ENCODE measurements at regions of chr17 and their contacts with region 1.

Region 1: DNA sequence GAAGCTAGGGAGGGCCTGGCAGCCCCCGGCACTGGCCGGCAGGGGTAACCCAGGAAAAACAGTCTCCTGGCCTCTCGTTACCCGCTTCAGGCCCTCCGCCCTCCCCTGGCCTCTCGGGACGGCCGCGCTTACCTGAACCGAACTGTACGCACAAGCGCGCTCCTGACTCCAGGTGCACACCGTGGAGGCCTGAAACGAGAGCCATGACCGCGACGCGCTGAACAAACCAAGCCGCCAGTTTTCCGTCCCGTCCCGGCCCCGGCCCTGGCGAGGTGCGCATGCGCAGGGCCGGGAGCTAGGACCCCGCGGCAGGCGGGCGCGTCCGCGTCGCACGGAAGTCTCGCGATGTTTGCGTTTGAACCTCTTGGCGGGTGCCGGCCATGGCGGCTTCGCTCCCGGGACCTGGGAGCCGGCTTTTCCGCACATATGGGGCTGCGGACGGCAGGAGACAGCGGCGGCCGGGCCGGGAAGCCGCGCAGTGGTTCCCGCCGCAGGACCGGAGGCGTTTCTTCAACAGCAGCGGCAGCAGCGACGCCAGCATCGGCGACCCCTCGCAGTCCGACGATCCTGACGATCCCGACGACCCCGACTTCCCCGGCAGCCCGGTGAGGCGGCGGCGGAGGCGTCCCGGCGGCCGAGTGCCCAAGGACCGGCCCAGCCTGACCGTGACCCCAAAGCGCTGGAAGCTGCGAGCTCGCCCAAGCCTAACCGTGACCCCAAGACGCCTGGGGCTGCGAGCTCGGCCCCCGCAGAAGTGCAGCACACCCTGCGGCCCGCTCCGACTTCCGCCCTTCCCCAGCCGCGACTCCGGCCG is at the start of gene HASPIN:
- DNase-seq: peak; percentile 94
- H3K4me3 Mint-ChIP-seq: peak within 1 kb of the TSS; percentile 93
- H3K27ac Mint-ChIP-seq: peak within 1 kb of the TSS; percentile 89
- H3K4me1 Mint-ChIP-seq: peaks cover 57% of the 10 kb centered on the region
- H3K27me3 Mint-ChIP-seq: no peaks in the 10 kb centered on the region
- total RNA-seq, gene HASPIN: 20.5 to 21.8 TPM

Region 2: GRCh38 chr17:3668279-3669085 is 55.3 kb before region 1 on chr17 and contains the starts of genes EMC6 and TAX1BP3:
- CTCF ChIA-PET with region 1: no interaction called
- intact Hi-C with region 1: loop called (anchors 2 kb)
- DNase-seq: peak; percentile 98
- H3K4me3 Mint-ChIP-seq: peak within 1 kb of the TSS; percentile 93
- H3K27ac Mint-ChIP-seq: peak within 1 kb of the TSS; percentile 79
- H3K4me1 Mint-ChIP-seq: peaks cover 14% of the 10 kb centered on the region
- H3K27me3 Mint-ChIP-seq: no peaks in the 10 kb centered on the region
- total RNA-seq, gene EMC6: 41.8 to 44.0 TPM
- total RNA-seq, gene TAX1BP3: 17.7 to 19.3 TPM

Region 3: GRCh38 chr17:3683054-3683511 is 40.7 kb before region 1 on chr17:
- CTCF ChIA-PET with region 1: interaction called, 15 read pairs
- intact Hi-C with region 1: loop called (anchors 2 kb)
- DNase-seq: peak; percentile 72
- H3K4me3 Mint-ChIP-seq: no peak overlapping the region
- H3K27ac Mint-ChIP-seq: no peak overlapping the region
- H3K4me1 Mint-ChIP-seq: peaks cover 7% of the 10 kb centered on the region
- H3K27me3 Mint-ChIP-seq: no peaks in the 10 kb centered on the region

Region 4: GRCh38 chr17:3695723-3696411 is 27.9 kb before region 1 on chr17 and contains the start of gene P2RX5:
- CTCF ChIA-PET with region 1: interaction called, 4 read pairs
- intact Hi-C with region 1: loop called (anchors 2 kb)
- DNase-seq: peak; percentile 48
- H3K4me3 Mint-ChIP-seq: peak within 1 kb of the TSS; percentile 94
- H3K27ac Mint-ChIP-seq: peak within 1 kb of the TSS; percentile 88
- H3K4me1 Mint-ChIP-seq: peaks cover 20% of the 10 kb centered on the region
- H3K27me3 Mint-ChIP-seq: no peaks in the 10 kb centered on the region
- total RNA-seq, gene P2RX5: 45.2 to 47.4 TPM

Region 5: DNA sequence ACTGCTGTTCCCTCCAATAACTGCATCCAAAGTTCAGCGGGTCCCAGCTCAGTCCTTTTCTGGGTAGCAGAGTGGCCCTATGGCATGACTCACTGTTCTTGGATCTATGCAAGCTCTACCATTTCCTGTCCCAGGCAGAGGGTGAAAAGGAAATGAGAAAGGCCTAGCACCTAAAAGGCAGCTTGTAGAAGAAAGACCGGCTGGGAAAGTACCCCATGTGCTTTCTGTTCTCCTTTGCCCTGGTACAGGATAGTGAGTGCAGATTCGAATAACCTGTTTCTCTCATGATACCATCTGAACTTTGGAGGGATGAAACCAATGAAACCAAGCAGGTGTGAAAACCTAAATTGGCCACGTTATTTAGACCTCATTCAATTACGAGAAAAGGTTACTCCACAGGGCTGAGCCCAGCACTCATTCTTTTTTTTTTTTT is 12.8 kb before region 1 on chr17:
- CTCF ChIA-PET with region 1: interaction called, 8 read pairs
- intact Hi-C with region 1: loop called (anchors 1 kb)
- DNase-seq: peak; percentile 89
- H3K4me3 Mint-ChIP-seq: no peak overlapping the region
- H3K27ac Mint-ChIP-seq: peak overlapping the region; percentile 87
- H3K4me1 Mint-ChIP-seq: peaks cover 46% of the 10 kb centered on the region
- H3K27me3 Mint-ChIP-seq: no peaks in the 10 kb centered on the region